ENCODE measurements at regions of chrX and their contacts with region 1.

Region 1: GRCh38 chrX:54999717-55000598 is at the start of gene APEX2:
- DNase-seq: peak; percentile 96
- H3K4me3 ChIP-seq: peak within 1 kb of the TSS; percentile 34 to 58 (median 55)
- H3K27ac ChIP-seq: peak within 1 kb of the TSS; percentile 83 to 87 (median 84)
- H3K4me1 ChIP-seq: peaks cover 0 to 15% (median 6%) of the 10 kb centered on the region in 4 donors
- H3K27me3 ChIP-seq: no peaks in the 10 kb centered on the region
- CTCF ChIP-seq: no peak
- EP300 ChIP-seq: no peak
- POLR2A ChIP-seq: peak; percentile 66 to 77
- total RNA-seq, gene APEX2: 3.9 to 5.7 (median 4.6) TPM

Region 2: DNA sequence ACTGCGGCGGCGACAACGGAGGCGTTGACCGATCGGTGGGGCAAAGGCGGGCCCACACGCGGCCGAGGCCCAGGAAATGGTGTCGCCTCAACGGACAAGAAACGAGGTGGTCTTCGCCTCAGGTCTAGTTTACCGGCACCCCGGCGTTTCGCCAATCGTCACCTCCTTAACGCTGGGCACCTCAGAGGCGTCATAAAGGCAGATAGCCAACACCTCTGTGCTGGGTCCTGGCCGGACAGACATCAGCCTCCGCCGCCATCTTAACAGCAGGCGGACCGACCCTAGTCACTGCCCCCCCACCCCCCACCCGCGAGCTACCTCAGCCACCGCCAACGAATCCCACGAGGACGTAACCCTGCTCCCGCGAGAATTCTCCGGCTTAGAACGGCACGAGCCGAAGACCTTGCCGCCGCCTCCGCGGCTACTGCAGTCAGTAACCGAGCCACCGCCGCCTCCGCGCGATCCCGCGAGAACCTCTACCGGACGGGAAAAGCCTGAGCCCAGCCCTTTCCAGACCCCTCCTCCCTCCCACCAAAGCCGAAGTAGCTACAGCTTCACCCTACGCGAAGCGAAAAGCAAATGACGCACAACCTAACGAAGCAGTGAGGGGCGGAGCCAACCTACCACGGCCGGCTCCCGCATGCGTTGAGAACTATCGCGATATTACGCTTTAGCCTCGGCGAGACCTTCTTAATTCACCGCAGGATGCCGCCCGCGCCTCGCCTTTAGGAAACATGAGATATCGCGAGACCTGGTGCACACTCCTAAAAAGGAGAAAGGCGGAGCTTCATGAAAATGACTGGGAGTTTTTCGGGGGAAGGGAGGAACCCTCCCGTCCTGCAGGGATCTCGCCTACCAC is 1316.2 kb before region 1 on chrX:
- intact Hi-C with region 1: loop called (anchors 5 kb)
- DNase-seq: peak; percentile 98
- H3K4me3 ChIP-seq: peak overlapping the region; percentile 48 to 69 (median 62)
- H3K27ac ChIP-seq: peak overlapping the region; percentile 89 to 92 (median 89)
- H3K4me1 ChIP-seq: peaks cover 0 to 22% (median 9%) of the 10 kb centered on the region in 4 donors
- H3K27me3 ChIP-seq: no peaks in the 10 kb centered on the region
- CTCF ChIP-seq: no peak
- EP300 ChIP-seq: no peak
- POLR2A ChIP-seq: peak; percentile 42 to 50

Region 3: DNA sequence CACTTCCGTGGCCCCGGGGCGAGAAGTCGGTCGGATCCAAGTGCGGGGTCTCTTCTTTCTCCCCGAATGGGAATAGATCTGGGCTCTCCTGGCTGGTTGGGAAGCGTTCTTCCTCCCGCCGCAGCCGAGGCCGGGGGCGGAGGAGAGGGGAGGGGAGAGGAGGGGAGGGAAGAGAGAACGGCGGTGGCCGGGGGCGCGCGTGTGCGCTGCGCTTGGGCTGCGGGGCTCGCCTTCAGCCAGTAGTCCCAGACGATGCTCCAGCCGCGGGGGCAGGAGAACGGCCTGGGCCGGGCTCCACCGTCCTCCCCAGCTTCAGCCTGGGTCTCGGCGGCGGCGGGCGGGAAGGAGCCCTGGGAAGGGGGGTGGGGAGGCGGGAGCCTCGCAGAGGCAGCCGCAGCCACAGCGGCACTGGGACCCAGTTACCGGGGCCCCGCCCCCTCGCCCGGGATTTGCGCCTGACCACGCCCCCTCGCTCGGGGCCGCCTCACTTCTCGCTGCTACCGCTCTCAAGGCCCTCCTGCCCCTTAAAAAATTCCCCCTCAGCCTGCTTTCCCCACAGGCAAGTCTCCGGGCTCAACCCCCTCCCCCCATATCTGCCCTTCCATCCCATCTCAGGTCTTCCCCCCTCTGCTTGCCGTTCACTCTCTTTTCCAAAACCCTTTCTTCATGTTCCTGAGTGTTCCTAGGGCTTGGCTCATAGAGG is 504.0 kb before region 1 on chrX and contains the start of gene FGD1:
- intact Hi-C with region 1: loop called (anchors 10 kb)
- DNase-seq: peak; percentile 85
- H3K4me3 ChIP-seq: peak within 1 kb of the TSS; percentile 53 to 66 (median 62)
- H3K27ac ChIP-seq: peak within 1 kb of the TSS; percentile 78 to 85 (median 83)
- H3K4me1 ChIP-seq: peaks cover 0 to 25% (median 14%) of the 10 kb centered on the region in 4 donors
- H3K27me3 ChIP-seq: no peaks in the 10 kb centered on the region
- CTCF ChIP-seq: no peak
- EP300 ChIP-seq: no peak
- POLR2A ChIP-seq: no peak
- total RNA-seq, gene FGD1: 3.2 to 9.7 (median 4.0) TPM

Region 4: DNA sequence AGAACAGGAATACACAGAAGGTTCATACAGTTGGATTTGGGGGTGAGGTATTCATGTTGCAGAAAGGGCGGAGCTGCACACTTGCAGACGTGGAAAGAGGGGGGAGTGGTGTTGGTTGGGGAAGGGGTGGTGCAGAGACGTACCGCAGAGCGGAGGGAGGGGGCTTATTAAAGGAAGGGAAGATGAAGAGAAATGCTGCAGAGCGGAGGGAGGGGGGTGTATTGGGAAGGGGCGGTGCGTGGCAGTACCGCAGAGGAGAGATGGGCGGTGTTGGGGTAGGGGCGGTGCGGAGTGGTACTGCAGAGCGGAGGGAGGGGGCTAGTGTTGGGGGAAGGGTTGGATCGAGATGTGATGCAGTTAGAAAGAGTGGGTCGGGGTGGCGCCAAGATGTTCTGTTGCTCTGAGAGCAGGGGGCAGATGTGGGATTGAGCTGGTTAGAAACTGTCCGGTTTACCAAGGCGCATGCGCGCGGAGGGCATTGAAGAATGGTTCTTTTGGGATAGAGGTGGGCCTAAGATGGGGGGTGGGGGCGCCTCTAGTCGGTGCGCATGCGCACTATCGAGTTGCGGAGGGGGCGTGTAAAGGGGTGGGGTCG is 78.4 kb before region 1 on chrX:
- intact Hi-C with region 1: loop called (anchors 5 kb)
- DNase-seq: peak; percentile 80
- H3K4me3 ChIP-seq: peak overlapping the region; percentile 34 to 54 (median 52)
- H3K27ac ChIP-seq: peak overlapping the region in 3 of 4 donors; percentile 53 to 62 (median 61)
- H3K4me1 ChIP-seq: peaks cover 0 to 6% (median 0%) of the 10 kb centered on the region in 4 donors
- H3K27me3 ChIP-seq: no peaks in the 10 kb centered on the region
- CTCF ChIP-seq: peak in 1 of 4 experiments; percentile 12
- EP300 ChIP-seq: no peak
- POLR2A ChIP-seq: no peak

Region 5: DNA sequence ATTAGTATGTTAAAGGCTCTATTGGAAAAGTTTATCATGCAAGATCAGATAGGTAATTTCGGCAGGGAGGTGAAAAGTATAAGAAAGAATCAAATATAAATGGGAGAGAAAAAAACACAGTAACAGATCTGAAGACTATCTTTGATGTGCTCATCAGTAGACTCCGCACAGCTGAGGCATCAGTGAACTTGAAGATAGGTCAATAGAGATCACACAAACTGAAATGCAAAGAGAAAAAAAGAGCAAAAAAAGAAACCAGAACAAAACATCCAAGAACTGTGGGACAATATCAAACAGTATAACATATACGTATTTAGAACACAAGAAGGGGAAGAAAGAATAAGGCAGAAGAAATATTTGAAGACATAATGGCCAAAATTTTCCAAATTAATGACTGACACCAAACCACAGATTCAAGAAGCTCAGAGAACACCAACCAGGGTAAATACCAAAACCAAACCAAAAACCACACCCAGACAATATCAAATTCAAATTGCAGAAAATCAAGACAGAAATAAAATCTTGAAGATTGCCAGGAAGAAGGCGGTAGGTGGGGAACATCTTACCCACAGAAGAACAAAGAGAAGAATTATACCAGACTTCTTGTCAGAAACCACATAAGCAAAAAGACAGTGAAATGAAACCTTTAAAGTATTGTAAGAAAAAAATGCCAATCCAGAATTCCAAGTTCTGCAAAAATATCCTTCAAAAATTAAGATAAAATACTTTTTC is 35.0 kb before region 1 on chrX:
- intact Hi-C with region 1: no loop called
- DNase-seq: no peak
- H3K4me3 ChIP-seq: no peak overlapping the region
- H3K27ac ChIP-seq: no peak overlapping the region
- H3K4me1 ChIP-seq: no peaks in the 10 kb centered on the region
- H3K27me3 ChIP-seq: no peaks in the 10 kb centered on the region
- CTCF ChIP-seq: no peak
- EP300 ChIP-seq: no peak
- POLR2A ChIP-seq: no peak

Region 6: GRCh38 chrX:55074851-55075467 is 75.0 kb after region 1 on chrX and contains the start of gene PAGE2B:
- intact Hi-C with region 1: no loop called
- DNase-seq: no peak
- H3K4me3 ChIP-seq: no peak within 1 kb of the TSS
- H3K27ac ChIP-seq: no peak within 1 kb of the TSS
- H3K4me1 ChIP-seq: no peaks in the 10 kb centered on the region
- H3K27me3 ChIP-seq: no peaks in the 10 kb centered on the region
- CTCF ChIP-seq: no peak
- EP300 ChIP-seq: no peak
- POLR2A ChIP-seq: no peak
- total RNA-seq, gene PAGE2B: not detected

Measured in sigmoid colon (tissue), 7 donors.